A673 (cell line): ENCODE measurements at regions of chr18 and their contacts with region 1.

Region 1: DNA sequence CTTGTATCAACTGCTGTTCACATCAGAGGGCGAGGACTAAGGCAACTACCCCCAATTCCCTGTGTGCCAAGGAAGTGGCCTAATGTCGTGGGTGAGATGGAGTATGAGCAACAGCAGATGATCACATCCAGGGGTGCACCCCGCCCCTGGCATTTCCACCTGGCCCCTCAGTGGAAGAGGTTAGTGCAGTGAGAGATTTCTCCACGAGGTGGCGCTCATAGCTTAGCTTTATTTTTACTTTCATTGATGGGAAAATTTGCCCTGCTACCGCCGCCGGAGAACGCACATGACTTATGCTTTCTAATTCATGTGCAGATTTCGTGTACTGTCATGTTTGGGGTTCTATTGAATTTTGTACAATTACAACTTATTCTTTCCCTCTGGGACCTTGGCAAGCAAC is 470.6 kb upstream of the MEX3C start:
- DNase-seq: peak; percentile 87
- H3K4me3 ChIP-seq: no peak overlapping the region
- H3K27ac ChIP-seq: no peak overlapping the region
- H3K4me1 ChIP-seq: peaks cover 32% of the 10 kb centered on the region
- H3K27me3 ChIP-seq: no peaks in the 10 kb centered on the region
- CTCF ChIP-seq: peak; percentile 78

Region 2: GRCh38 chr18:51110073-51110803 is 557.9 kb before region 1 on chr18:
- CTCF ChIA-PET with region 1: no interaction called
- POLR2A ChIA-PET with region 1: no interaction called
- intact Hi-C with region 1: loop called (anchors 5 kb)
- DNase-seq: peak; percentile 73
- H3K4me3 ChIP-seq: peak overlapping the region; percentile 21
- H3K27ac ChIP-seq: no peak overlapping the region
- H3K4me1 ChIP-seq: no peaks in the 10 kb centered on the region
- H3K27me3 ChIP-seq: no peaks in the 10 kb centered on the region
- CTCF ChIP-seq: peak; percentile 89

Region 3: DNA sequence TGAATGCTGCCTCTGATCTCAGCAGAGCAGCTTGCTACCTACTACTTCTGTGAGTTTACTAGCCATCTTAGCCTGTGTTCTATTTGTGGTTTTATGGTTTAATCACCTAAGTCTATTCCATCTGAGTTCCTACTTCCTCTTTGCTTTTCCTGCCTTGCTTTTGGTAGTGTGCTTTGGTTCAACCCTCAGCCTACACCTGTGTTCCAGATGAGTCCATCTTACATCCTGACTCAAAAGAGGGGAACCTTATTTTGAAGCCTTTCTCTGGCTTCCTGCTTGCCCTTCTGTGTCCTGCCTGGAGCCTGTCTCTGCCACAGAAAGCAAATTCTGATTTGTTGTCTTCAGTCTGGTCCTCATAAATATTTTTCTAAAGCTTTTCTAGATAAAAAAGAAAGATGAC is 59.7 kb after region 1 on chr18:
- CTCF ChIA-PET with region 1: no interaction called
- POLR2A ChIA-PET with region 1: no interaction called
- intact Hi-C with region 1: no loop called
- DNase-seq: no peak
- H3K4me3 ChIP-seq: no peak overlapping the region
- H3K27ac ChIP-seq: no peak overlapping the region
- H3K4me1 ChIP-seq: peaks cover 39% of the 10 kb centered on the region
- H3K27me3 ChIP-seq: no peaks in the 10 kb centered on the region
- CTCF ChIP-seq: no peak

Region 4: GRCh38 chr18:51907687-51908597 is 239.8 kb after region 1 on chr18:
- CTCF ChIA-PET with region 1: interaction called, 13 read pairs
- POLR2A ChIA-PET with region 1: no interaction called
- intact Hi-C with region 1: no loop called
- DNase-seq: no peak
- H3K4me3 ChIP-seq: no peak overlapping the region
- H3K27ac ChIP-seq: no peak overlapping the region
- H3K4me1 ChIP-seq: no peaks in the 10 kb centered on the region
- H3K27me3 ChIP-seq: no peaks in the 10 kb centered on the region
- CTCF ChIP-seq: no peak

Region 5: DNA sequence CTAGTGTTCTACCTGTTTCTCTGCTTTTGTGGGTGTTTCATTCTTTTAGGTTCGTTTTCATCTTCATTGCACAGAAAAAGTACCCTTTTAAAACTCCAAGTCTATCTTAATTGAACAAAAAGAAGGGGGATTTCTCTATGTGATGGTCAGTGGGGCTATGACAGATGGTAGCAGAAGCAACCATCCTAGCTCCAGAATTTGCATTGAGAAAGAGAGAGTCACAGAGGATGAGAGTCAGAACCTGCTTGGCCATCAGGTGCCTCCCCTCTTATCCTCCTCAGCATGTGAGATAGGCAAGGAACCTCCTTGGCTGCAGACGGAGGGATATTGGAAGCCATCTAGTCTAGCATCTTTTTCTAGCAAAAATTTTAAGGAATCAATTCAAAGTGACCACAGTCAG is 273.9 kb after region 1 on chr18:
- CTCF ChIA-PET with region 1: no interaction called
- POLR2A ChIA-PET with region 1: no interaction called
- intact Hi-C with region 1: loop called (anchors 5 kb)
- DNase-seq: no peak
- H3K4me3 ChIP-seq: no peak overlapping the region
- H3K27ac ChIP-seq: no peak overlapping the region
- H3K4me1 ChIP-seq: no peaks in the 10 kb centered on the region
- H3K27me3 ChIP-seq: no peaks in the 10 kb centered on the region
- CTCF ChIP-seq: no peak

Region 6: DNA sequence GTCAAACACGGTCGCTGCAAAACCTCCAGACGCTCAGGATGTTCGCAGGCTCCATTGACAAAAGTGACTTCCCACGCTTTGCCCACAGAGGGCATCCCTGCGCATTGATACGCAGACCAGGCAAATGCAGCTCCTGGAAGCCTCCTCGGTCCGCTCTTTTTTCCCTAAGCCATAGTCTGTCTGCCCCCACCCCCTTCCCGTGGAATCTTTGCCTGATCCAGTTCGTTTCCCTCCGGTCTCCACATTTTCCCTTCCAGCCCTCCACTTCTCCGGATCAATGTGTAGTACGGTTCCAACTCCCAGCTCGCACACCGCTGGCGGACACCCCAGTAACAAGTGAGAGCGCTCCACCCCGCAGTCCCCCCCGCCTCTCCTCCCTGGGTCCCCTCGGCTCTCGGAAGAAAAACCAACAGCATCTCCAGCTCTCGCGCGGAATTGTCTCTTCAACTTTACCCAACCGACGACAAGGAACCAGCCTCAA is 671.8 kb after region 1 on chr18 and contains the start of gene DCC:
- CTCF ChIA-PET with region 1: interaction called, 3 read pairs
- POLR2A ChIA-PET with region 1: interaction called, 3 read pairs
- intact Hi-C with region 1: loop called (anchors 2 kb)
- DNase-seq: peak; percentile 98
- H3K4me3 ChIP-seq: peak within 1 kb of the TSS; percentile 96
- H3K27ac ChIP-seq: peak within 1 kb of the TSS; percentile 94
- H3K4me1 ChIP-seq: peaks cover 17% of the 10 kb centered on the region
- H3K27me3 ChIP-seq: no peaks in the 10 kb centered on the region
- CTCF ChIP-seq: peak; percentile 72
- total RNA-seq, gene DCC: 93.0 and 99.5 TPM in 2 replicates

Region 7: GRCh38 chr18:52422985-52423601 is 755.0 kb after region 1 on chr18:
- CTCF ChIA-PET with region 1: no interaction called
- POLR2A ChIA-PET with region 1: no interaction called
- intact Hi-C with region 1: loop called (anchors 5 kb)
- DNase-seq: peak; percentile 83
- H3K4me3 ChIP-seq: no peak overlapping the region
- H3K27ac ChIP-seq: peak overlapping the region; percentile 99
- H3K4me1 ChIP-seq: peaks cover 90% of the 10 kb centered on the region
- H3K27me3 ChIP-seq: no peaks in the 10 kb centered on the region
- CTCF ChIP-seq: peak; percentile 58

Region 8: GRCh38 chr18:52903857-52904256 is 1235.8 kb after region 1 on chr18:
- CTCF ChIA-PET with region 1: interaction called, 4 read pairs
- POLR2A ChIA-PET with region 1: no interaction called
- intact Hi-C with region 1: loop called (anchors 5 kb)
- DNase-seq: peak; percentile 85
- H3K4me3 ChIP-seq: no peak overlapping the region
- H3K27ac ChIP-seq: no peak overlapping the region
- H3K4me1 ChIP-seq: peaks cover 25% of the 10 kb centered on the region
- H3K27me3 ChIP-seq: no peaks in the 10 kb centered on the region
- CTCF ChIP-seq: peak; percentile 93